GM23248 (cell line): ENCODE measurements at regions of chr9 and their contacts with region 1.

Region 1: DNA sequence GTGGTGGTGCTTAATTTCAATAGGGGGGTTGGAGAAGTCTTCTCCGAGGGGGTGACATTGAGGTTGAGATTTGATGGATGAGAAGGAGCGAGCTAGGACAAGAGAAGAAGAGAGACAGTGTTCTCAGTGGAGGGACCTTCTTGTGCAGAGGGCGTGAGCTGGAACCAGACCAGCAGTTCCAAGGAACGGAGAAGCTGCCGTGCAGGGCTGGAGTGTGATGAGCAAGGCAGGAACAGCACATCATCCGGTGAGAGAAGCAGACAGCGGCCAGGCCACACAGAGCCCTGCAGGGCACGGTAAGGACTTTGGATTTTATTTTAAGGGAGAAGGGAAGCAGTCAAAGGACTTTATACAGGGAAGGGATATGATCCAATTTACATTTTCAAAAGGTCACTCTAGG is 206.9 kb downstream of the MELK start:
- DNase-seq: peak; percentile 17
- H3K4me3 ChIP-seq: no peak overlapping the region
- H3K27ac ChIP-seq: no peak overlapping the region
- H3K4me1 ChIP-seq: no peaks in the 10 kb centered on the region
- H3K27me3 ChIP-seq: peaks cover 35% of the 10 kb centered on the region

Region 2: GRCh38 chr9:36828611-36829013 is 49.0 kb after region 1 on chr9:
- in situ Hi-C with region 1: loop called (anchors 5 kb)
- DNase-seq: no peak
- H3K4me3 ChIP-seq: no peak overlapping the region
- H3K27ac ChIP-seq: no peak overlapping the region
- H3K4me1 ChIP-seq: no peaks in the 10 kb centered on the region
- H3K27me3 ChIP-seq: peaks cover 35% of the 10 kb centered on the region